Mucosa of descending colon (tissue), 3 donors: ENCODE measurements at regions of chr5 and their contacts with region 1.

Region 1: GRCh38 chr5:15003511-15003920 is 131.9 kb upstream of the ANKH start:
- DNase-seq: peak in 2 of 3 donors; percentile 46 to 81
- ATAC-seq: peak; percentile 87
- H3K4me3 ChIP-seq: no peak overlapping the region
- H3K4me1 ChIP-seq: peaks cover 9% of the 10 kb centered on the region
- CTCF ChIP-seq: peak; percentile 56

Region 2: DNA sequence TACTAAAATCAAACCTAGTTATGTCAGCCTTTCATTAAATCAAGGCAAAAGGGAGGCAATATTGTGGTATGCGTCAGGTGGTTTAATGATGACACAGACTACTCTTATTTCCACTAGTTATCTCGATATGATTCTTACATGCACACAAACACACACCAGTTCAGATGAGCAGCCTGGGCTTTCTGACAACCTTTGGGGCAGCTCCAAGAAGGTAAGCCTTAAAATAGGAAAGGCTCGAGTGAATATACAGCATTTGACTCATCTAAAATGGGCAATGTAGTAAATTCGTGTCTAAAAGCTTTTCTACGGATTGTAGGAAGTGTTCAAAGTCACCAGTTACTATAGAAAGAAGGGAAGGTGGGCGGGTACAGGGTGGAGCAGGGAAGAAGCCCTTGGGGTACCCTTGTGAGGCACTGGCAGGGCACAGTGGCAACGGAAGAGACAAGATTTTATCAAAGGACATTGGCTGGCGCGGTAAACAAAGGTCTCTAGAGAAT is 133.8 kb before region 1 on chr5:
- intact Hi-C with region 1: loop called in 1 of 2 experiments (anchors 10 kb)
- DNase-seq: peak in 1 of 3 donors; percentile 28
- ATAC-seq: no peak
- H3K4me3 ChIP-seq: no peak overlapping the region
- H3K4me1 ChIP-seq: peaks cover 20% of the 10 kb centered on the region
- CTCF ChIP-seq: no peak